Transverse colon (tissue), 4 donors: ENCODE measurements at regions of chr1 and their contacts with region 1.

Region 1: GRCh38 chr1:96804648-96805047 is 83.1 kb downstream of the PTBP2 start:
- DNase-seq: no peak
- H3K4me3 ChIP-seq: no peak overlapping the region
- H3K27ac ChIP-seq: no peak overlapping the region
- H3K4me1 ChIP-seq: peaks cover 0 to 6% (median 0%) of the 10 kb centered on the region in 4 donors
- H3K27me3 ChIP-seq: no peaks in the 10 kb centered on the region
- CTCF ChIP-seq: no peak
- EP300 ChIP-seq: no peak
- POLR2A ChIP-seq: no peak

Region 2: DNA sequence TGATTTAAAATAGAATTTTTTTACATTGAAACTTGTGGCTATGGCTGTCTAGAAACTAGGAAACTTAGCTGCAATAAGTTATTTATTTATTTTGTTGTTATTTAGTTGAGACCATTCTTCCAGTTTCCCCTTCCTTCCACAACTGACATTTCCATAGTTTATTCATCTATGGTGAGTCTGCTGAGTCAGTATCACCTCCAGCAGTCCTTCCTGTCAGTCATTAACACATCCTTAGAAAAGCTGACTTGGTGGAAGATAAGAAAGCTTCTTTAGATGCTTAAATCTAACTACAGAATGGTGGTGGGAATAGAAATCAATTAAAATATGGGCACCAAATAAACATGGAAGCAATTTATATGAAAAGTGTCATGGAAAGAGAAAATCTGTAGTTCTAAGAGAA is 856.6 kb before region 1 on chr1:
- in situ Hi-C with region 1: no loop called
- intact Hi-C with region 1: no loop called
- DNase-seq: no peak
- H3K4me3 ChIP-seq: no peak overlapping the region
- H3K27ac ChIP-seq: no peak overlapping the region
- H3K4me1 ChIP-seq: peaks cover 0 to 4% (median 1%) of the 10 kb centered on the region in 4 donors
- H3K27me3 ChIP-seq: no peaks in the 10 kb centered on the region
- CTCF ChIP-seq: no peak
- EP300 ChIP-seq: no peak
- POLR2A ChIP-seq: no peak

Region 3: DNA sequence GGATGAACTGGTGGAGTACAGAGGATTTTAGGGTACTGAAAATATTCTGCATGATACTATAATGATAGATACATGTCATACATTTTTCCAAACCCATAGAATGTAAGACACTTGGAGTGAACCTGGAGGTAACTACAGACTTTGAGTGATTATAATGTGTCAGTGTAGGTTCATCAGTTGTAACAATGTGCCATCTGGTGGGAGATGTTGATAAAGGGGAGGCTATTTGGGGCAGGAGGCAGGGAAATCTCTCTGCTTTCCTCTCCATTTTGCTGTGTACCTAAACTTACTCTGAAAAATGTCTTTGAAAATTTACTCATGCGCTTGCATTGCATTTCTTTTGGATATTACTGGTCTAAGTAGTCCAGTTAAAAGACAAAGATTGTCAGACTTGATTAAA is 47.9 kb before region 1 on chr1:
- in situ Hi-C with region 1: no loop called
- intact Hi-C with region 1: loop called (anchors 1 kb)
- DNase-seq: no peak
- H3K4me3 ChIP-seq: no peak overlapping the region
- H3K27ac ChIP-seq: no peak overlapping the region
- H3K4me1 ChIP-seq: peaks cover 0 to 6% (median 0%) of the 10 kb centered on the region in 4 donors
- H3K27me3 ChIP-seq: no peaks in the 10 kb centered on the region
- CTCF ChIP-seq: no peak
- EP300 ChIP-seq: no peak
- POLR2A ChIP-seq: no peak

Region 4: GRCh38 chr1:96872757-96873156 is 68.1 kb after region 1 on chr1:
- in situ Hi-C with region 1: no loop called
- intact Hi-C with region 1: no loop called
- DNase-seq: no peak
- H3K4me3 ChIP-seq: no peak overlapping the region
- H3K27ac ChIP-seq: no peak overlapping the region
- H3K4me1 ChIP-seq: no peaks in the 10 kb centered on the region
- H3K27me3 ChIP-seq: no peaks in the 10 kb centered on the region
- CTCF ChIP-seq: no peak
- EP300 ChIP-seq: no peak
- POLR2A ChIP-seq: no peak

Region 5: DNA sequence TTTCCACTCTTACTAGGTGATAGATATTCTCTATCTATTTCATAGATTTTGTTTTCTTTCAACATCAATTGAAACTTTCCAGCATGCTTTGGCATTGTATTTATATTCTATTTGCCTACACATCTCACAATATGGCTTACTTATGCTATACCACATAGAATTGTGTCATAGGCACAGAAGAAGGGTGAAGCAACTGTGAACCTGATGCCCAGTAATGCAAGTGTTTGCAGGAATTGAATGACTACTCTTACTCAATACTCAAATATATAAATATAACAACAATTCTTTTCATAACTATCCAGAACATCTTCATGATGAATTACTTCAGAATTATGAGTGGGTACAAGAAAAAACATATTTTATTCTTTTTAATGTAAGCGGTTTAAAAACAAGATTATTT is 82.9 kb after region 1 on chr1:
- in situ Hi-C with region 1: no loop called
- intact Hi-C with region 1: no loop called
- DNase-seq: no peak
- H3K4me3 ChIP-seq: no peak overlapping the region
- H3K27ac ChIP-seq: no peak overlapping the region
- H3K4me1 ChIP-seq: no peaks in the 10 kb centered on the region
- H3K27me3 ChIP-seq: no peaks in the 10 kb centered on the region
- CTCF ChIP-seq: no peak
- EP300 ChIP-seq: no peak
- POLR2A ChIP-seq: no peak